Ovary (tissue), 10 donors: ENCODE measurements at regions of chr2 and their contacts with region 1.

Region 1: DNA sequence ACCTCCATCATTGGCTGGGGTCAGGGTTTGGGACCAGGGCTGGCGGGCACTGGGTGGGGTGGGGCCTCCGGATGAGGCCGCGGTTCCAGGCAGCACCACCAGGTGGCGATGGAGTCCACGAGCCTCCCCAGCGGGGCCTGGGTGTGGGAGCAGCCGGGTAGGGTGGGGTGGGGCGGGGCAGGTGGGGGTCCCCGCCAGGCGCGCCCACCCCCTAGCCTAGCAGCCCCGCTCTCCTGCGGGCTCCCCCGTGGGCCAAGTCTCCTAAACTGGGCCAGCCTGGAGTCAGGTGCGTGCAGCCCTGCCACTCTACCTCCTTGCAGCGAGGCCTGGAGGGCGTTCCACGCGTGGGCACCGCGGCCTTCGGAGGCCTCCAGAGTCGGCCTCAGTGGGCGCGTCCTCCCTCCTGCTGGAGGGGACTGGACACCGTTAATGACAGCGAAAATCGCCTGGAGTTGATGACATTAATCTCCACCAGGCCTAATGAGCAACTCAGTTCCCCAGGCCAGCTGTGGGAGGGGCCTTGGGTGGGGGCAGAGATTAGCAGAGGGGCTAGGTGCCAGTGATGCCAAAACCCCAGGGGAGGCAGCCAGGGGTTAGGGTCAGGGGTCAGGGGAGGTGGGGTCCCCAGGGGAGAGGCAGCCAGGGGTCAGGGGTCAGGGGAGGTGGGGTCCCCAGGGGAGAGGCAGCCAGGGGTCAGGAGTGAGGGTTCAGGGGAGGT is 187.6 kb downstream of the TWIST2 start:
- DNase-seq: peak; percentile 49 to 80 (median 67)
- H3K4me3 ChIP-seq: no peak overlapping the region
- H3K27ac ChIP-seq: no peak overlapping the region
- H3K4me1 ChIP-seq: no peaks in the 10 kb centered on the region
- H3K27me3 ChIP-seq: no peaks in the 10 kb centered on the region
- CTCF ChIP-seq: peak; percentile 65 to 89 (median 66)
- EP300 ChIP-seq: no peak
- POLR2A ChIP-seq: no peak

Region 2: GRCh38 chr2:238883421-238883901 is 152.1 kb before region 1 on chr2:
- intact Hi-C with region 1: no loop called
- DNase-seq: no peak
- H3K4me3 ChIP-seq: no peak overlapping the region
- H3K27ac ChIP-seq: no peak overlapping the region
- H3K4me1 ChIP-seq: peaks cover 6% of the 10 kb centered on the region
- H3K27me3 ChIP-seq: no peaks in the 10 kb centered on the region
- CTCF ChIP-seq: no peak
- EP300 ChIP-seq: no peak
- POLR2A ChIP-seq: no peak

Region 3: DNA sequence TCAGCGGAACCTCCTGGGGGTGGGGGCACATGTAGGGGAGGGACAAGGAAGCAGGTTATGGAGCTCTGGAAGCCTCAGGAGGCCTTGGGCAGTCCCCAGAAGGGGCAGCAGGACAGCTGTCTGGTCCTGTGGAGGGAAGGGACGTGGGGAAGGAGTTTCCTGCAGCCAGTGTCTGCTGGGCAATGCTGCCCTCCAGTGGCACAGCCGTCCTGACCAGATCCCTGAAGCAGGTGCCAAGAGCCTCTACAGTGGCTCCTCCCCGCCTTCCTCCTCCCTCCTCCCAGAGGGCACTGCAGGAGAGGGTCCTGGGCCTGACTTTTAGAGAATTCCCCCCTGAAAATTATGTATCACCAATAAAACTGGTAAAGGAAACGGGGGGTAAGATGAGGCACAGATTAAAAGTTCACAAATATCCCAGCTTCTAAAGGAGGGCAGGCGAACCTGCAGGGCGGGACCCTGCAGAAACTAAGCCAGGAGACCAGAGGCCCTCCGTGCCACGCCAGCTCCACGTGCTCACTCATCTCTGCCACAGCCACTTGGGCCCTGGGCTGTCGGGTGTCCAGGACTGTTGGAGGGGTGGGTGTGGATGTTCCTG is 70.9 kb after region 1 on chr2:
- intact Hi-C with region 1: no loop called
- DNase-seq: peak in 2 of 5 donors; percentile 57 to 58
- H3K4me3 ChIP-seq: no peak overlapping the region
- H3K27ac ChIP-seq: no peak overlapping the region
- H3K4me1 ChIP-seq: peaks cover 7% of the 10 kb centered on the region
- H3K27me3 ChIP-seq: no peaks in the 10 kb centered on the region
- CTCF ChIP-seq: no peak
- EP300 ChIP-seq: no peak
- POLR2A ChIP-seq: no peak

Region 4: GRCh38 chr2:239882331-239882732 is 846.8 kb after region 1 on chr2:
- intact Hi-C with region 1: loop called in 2 of 4 experiments (anchors 5 kb)
- DNase-seq: peak; percentile 42 to 64 (median 53)
- H3K4me3 ChIP-seq: no peak overlapping the region
- H3K27ac ChIP-seq: peak overlapping the region in 1 of 2 donors; percentile 40
- H3K4me1 ChIP-seq: peaks cover 8% of the 10 kb centered on the region
- H3K27me3 ChIP-seq: no peaks in the 10 kb centered on the region
- CTCF ChIP-seq: peak; percentile 30 to 56 (median 42)
- EP300 ChIP-seq: no peak
- POLR2A ChIP-seq: no peak

Region 5: DNA sequence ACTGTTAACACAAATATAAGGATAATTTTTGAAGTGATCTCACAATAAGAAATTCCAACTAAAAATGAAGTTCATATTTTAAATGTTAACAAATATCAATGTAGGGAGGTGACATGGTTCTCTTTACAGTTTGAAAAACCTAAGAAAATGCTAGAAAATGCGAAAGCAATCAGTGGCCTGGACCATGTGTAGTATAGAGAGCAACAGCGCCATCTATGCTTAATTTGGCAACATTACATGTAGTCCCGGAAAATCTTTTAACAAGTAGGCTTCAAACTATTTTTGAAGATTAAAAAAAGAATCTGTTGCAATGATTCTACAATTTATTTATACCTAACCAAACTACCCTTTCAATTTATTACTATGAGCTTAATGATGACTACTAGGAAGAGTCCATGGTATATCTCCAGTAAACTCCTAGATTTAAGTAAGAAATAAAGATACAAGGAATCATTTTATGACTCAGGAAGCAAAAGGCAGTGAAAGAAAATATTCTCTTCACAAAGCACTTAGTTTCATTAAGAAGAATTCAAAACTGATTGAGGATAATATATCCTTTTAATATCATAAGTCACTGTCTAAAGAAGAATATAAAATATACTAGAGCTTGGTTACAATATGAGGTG is 956.3 kb after region 1 on chr2:
- intact Hi-C with region 1: loop called in 2 of 4 experiments (anchors 5 to 10 kb)
- DNase-seq: no peak
- H3K4me3 ChIP-seq: no peak overlapping the region
- H3K27ac ChIP-seq: no peak overlapping the region
- H3K4me1 ChIP-seq: no peaks in the 10 kb centered on the region
- H3K27me3 ChIP-seq: no peaks in the 10 kb centered on the region
- CTCF ChIP-seq: peak; percentile 52 to 76 (median 71)
- EP300 ChIP-seq: no peak
- POLR2A ChIP-seq: no peak

Region 6: DNA sequence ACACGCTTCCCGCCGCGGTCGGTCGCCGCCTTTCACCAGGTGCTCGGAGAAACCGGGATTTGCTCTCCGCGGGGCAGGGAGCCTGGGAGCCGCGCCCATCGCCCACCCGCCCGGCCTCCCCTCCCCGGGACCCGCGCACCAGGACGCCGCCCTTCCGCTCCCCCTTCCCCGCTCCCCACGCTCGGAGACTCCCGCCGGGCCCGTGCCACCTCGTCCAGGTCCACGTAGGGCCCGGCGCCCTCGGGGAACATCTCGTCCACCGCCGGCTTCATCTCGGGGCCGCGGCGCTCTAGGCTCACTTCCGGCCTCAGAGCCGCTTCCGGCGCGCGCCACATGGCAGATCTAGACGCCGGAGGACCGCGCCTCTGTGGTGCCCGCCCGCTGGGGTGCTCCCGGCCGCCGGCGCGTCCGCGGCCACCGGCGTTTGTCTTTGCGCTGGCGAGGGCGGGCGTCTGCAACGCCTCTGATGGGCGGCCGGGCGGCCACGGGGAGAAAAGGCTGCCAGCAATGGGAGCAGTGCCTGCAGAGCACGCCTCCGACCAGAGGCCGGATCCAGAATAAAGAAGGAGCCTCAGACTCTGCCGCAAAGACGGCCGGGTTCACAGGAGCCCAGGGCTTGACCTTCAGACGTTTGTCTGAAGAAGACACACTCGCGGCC is 1100.6 kb after region 1 on chr2 and contains the start of gene COPS9:
- intact Hi-C with region 1: loop called in 2 of 4 experiments (anchors 10 kb)
- DNase-seq: peak; percentile 78 to 93 (median 82)
- H3K4me3 ChIP-seq: peak within 1 kb of the TSS; percentile 100
- H3K27ac ChIP-seq: peak within 1 kb of the TSS in 1 of 2 donors; percentile 76
- H3K4me1 ChIP-seq: peaks cover 7% of the 10 kb centered on the region
- H3K27me3 ChIP-seq: no peaks in the 10 kb centered on the region
- CTCF ChIP-seq: no peak
- EP300 ChIP-seq: no peak
- POLR2A ChIP-seq: peak; percentile 42
- total RNA-seq, gene COPS9: 92.1 to 286 (median 101) TPM

Region 7: DNA sequence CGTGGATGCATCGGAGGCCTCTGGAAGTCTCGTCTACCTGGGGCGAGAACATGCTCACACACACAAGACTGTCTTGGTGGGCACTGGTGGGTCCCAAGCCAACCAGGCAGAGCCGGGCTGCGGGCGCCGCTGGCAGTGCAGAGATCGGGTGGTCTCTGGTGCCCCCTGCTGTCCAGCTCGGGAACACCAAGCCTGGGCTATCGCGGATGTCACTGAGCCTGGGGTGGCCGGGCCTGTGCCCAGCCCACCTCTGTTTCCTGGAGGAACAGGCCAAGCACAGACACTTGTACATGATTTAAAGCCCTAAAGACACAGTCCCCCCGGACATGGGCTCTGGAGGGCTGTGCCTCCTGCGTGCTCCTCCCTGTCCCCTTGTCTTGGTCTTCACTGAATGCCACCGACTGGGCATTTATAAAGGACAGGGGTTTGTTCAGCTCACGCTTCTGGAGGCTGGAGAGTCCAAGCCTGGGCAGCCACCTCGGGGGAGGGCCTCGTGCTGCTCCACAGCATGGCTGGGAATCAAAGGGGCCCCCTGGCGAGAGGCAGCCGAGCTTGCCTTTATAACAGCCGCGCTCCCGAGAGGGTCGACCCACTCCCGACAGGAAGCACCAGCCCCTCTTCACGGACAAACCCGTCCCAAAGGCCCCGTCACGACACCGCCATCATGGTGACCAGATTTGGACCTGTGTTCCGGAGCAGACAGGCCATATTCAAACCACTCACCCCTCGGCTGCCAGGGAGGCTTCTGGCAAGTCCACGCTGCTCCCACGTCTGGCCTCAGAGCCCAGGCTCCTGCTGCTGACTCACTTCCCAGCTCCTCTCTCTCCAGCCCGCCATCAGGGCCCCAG is 1108.5 kb after region 1 on chr2:
- intact Hi-C with region 1: loop called in 2 of 4 experiments (anchors 10 kb)
- DNase-seq: peak; percentile 53 to 82 (median 72)
- H3K4me3 ChIP-seq: no peak overlapping the region
- H3K27ac ChIP-seq: no peak overlapping the region
- H3K4me1 ChIP-seq: peaks cover 2% of the 10 kb centered on the region
- H3K27me3 ChIP-seq: no peaks in the 10 kb centered on the region
- CTCF ChIP-seq: peak; percentile 83 to 89 (median 86)
- EP300 ChIP-seq: no peak
- POLR2A ChIP-seq: no peak